Common myeloid progenitor, CD34-positive (primary cell): ENCODE measurements at regions of chr2 and their contacts with region 1.

Region 1: GRCh38 chr2:200695191-200695590 is 109.4 kb downstream of the AOX1 start:
- DNase-seq: peak; percentile 72 to 94 (median 91)
- H3K4me3 ChIP-seq: peak overlapping the region in 6 of 7 experiments; percentile 7 to 80 (median 70)
- H3K27ac ChIP-seq: peak overlapping the region; percentile 65 to 79
- H3K4me1 ChIP-seq: peaks cover 29 to 60% (median 58%) of the 10 kb centered on the region in 4 experiments
- H3K27me3 ChIP-seq: no peaks in the 10 kb centered on the region

Region 2: GRCh38 chr2:200533754-200534153 is 161.4 kb before region 1 on chr2:
- CTCF ChIA-PET with region 1: no interaction called
- POLR2A ChIA-PET with region 1: no interaction called
- DNase-seq: no peak
- H3K4me3 ChIP-seq: no peak overlapping the region
- H3K27ac ChIP-seq: no peak overlapping the region
- H3K4me1 ChIP-seq: peaks cover 0 to 3% (median 0%) of the 10 kb centered on the region in 4 experiments
- H3K27me3 ChIP-seq: no peaks in the 10 kb centered on the region

Region 3: DNA sequence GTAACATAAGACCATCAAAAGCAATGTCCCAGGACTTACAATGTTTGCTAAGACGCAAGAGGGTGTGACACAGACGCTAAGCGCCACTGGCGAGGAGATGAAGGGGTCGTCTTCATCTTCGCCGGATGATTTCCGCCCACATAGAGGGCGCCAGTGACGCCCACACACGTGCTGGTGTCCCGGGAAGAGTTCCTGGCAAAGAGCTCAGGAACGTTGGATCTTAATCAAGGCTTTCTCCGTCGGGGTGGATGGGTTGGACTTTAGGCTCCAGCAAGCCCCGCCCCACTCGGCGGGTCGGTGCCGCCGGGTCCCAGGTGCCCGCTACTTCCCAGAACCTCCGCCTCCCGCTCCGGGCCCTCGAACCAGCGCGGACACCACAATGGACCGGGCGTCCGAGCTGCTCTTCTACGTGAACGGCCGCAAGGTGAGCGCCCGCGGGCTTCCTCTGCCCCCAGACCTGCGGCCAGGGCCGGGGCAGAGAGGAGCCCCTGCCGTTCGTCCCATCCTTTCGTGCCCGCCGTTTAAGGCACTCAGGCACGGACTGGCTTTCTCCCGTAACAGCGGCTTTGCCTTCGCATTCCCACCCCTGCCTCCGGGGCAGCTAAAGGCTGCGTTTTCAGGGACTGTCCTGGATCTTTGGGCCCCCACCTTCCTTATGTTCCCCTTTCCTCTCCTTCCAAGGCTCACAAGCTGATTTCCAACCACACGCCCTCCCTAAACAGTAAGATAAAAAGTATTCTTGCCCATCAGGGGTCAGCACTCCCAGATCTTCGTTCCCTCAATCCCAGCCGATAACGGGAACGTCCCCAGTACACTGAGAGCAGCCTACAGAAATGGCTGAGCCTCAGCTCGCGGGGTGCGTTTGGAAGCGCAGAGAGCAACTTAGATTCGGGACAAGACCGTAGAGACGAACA is 109.2 kb before region 1 on chr2 and contains the start of gene AOX1:
- CTCF ChIA-PET with region 1: interaction called, 10 read pairs
- POLR2A ChIA-PET with region 1: no interaction called
- DNase-seq: peak; percentile 17 to 61 (median 41)
- H3K4me3 ChIP-seq: peak within 1 kb of the TSS; percentile 62 to 97 (median 78)
- H3K27ac ChIP-seq: no peak within 1 kb of the TSS
- H3K4me1 ChIP-seq: peaks cover 0 to 11% (median 9%) of the 10 kb centered on the region in 4 experiments
- H3K27me3 ChIP-seq: peaks cover 0 to 4% (median 0%) of the 10 kb centered on the region in 5 experiments

Region 4: DNA sequence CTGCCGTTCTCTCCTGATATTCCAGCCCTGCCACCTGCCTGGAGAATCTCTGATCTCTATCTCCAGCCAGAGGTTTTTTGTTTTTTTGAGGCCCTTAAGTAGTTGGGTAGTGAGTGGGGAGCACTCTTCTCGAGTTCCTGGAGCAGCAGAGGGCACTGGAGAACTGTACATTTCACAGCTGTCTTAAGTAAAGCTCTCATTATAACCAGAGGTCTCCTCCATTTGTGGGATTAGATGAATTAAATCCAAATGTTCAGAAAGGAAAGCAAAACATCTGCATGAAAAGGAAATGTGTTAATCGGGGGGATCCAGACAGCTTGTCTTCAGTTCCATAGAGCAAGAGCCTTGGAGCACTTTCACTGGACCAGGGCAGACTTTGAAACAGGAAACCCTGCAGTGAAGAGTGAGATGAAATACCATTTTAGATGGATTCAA is 76.6 kb before region 1 on chr2:
- CTCF ChIA-PET with region 1: interaction called, 115 read pairs
- POLR2A ChIA-PET with region 1: no interaction called
- DNase-seq: peak; percentile 52 to 69 (median 59)
- H3K4me3 ChIP-seq: no peak overlapping the region
- H3K27ac ChIP-seq: no peak overlapping the region
- H3K4me1 ChIP-seq: peaks cover 0 to 20% (median 8%) of the 10 kb centered on the region in 4 experiments
- H3K27me3 ChIP-seq: no peaks in the 10 kb centered on the region

Region 5: GRCh38 chr2:200765139-200765951 is 70.2 kb after region 1 on chr2:
- CTCF ChIA-PET with region 1: no interaction called
- POLR2A ChIA-PET with region 1: no interaction called
- DNase-seq: no peak
- H3K4me3 ChIP-seq: no peak overlapping the region
- H3K27ac ChIP-seq: no peak overlapping the region
- H3K4me1 ChIP-seq: no peaks in the 10 kb centered on the region
- H3K27me3 ChIP-seq: no peaks in the 10 kb centered on the region